ENCODE measurements at regions of chr9 and their contacts with region 1.

Region 1: GRCh38 chr9:93453047-93453914 is at the start of gene FAM120AOS:
- DNase-seq: peak; percentile 99
- H3K4me3 ChIP-seq: peak within 1 kb of the TSS; percentile 67 to 73
- H3K27ac ChIP-seq: peak within 1 kb of the TSS; percentile 83 to 94
- H3K4me1 ChIP-seq: peaks cover 18% of the 10 kb centered on the region
- H3K27me3 ChIP-seq: no peaks in the 10 kb centered on the region
- CTCF ChIP-seq: no peak
- POLR2A ChIP-seq: no peak
- total RNA-seq, gene FAM120AOS: 40.9 to 62.0 TPM

Region 2: GRCh38 chr9:93566408-93567270 is 113.4 kb after region 1 on chr9:
- intact Hi-C with region 1: loop called (anchors 10 kb)
- DNase-seq: peak; percentile 97
- H3K4me3 ChIP-seq: peak overlapping the region; percentile 67 to 75
- H3K27ac ChIP-seq: peak overlapping the region; percentile 61 to 92
- H3K4me1 ChIP-seq: peaks cover 7% of the 10 kb centered on the region
- H3K27me3 ChIP-seq: no peaks in the 10 kb centered on the region
- CTCF ChIP-seq: peak; percentile 93 to 96 (median 95)
- POLR2A ChIP-seq: peak; percentile 79